Testis (tissue), 5 donors: ENCODE measurements at regions of chr10 and their contacts with region 1.

Region 1: GRCh38 chr10:16843252-16843870 is 26.1 kb upstream of the RSU1 start:
- DNase-seq: no peak
- H3K4me3 ChIP-seq: no peak overlapping the region
- H3K27ac ChIP-seq: no peak overlapping the region
- H3K4me1 ChIP-seq: no peaks in the 10 kb centered on the region
- H3K27me3 ChIP-seq: no peaks in the 10 kb centered on the region
- CTCF ChIP-seq: peak; percentile 41 to 76 (median 45)
- POLR2A ChIP-seq: no peak

Region 2: DNA sequence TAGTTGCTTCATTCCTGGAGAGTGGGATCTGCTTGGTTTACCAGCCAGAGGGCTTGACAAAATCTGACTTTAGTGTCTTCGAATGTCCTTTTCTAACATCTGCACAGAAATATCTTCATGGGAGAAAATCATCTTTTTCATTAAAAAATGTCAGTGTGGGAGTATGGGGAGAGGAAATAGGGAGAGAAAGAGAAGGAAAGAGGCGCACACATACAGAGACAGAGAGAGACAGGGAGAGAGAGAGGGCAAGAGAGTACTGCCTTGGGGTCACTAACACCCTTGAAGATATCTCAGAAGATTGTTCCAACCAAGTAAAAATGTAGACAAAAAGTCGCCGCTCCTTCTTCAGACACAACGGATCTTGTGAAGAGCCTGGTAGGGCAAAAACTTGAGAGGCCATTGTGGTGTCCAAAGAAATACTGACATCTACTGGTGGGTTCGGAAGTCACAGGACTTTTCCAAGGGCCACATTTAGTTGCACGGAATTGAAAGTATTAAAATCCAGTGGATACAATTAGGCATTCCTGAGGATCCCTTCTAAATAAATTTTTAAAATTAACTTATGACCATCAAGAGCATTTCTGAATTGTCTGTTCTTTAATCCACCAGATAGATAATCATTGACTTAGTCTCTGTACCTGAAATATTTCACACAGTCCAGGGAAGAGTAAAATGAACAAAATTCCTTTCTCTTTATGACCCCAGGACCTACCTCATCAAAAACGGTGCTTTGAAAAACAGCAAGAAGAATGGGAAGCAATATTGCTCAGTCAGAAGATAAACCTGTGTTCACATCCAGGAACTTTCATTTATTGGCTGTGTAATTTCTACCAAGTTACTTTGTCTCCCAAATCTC is 414.3 kb after region 1 on chr10:
- intact Hi-C with region 1: loop called (anchors 5 kb)
- DNase-seq: peak; percentile 74
- H3K4me3 ChIP-seq: peak overlapping the region in 1 of 2 donors; percentile 14
- H3K27ac ChIP-seq: peak overlapping the region; percentile 21 to 36
- H3K4me1 ChIP-seq: peaks cover 4% of the 10 kb centered on the region
- H3K27me3 ChIP-seq: no peaks in the 10 kb centered on the region
- CTCF ChIP-seq: peak; percentile 61 to 83 (median 76)
- POLR2A ChIP-seq: no peak

Region 3: DNA sequence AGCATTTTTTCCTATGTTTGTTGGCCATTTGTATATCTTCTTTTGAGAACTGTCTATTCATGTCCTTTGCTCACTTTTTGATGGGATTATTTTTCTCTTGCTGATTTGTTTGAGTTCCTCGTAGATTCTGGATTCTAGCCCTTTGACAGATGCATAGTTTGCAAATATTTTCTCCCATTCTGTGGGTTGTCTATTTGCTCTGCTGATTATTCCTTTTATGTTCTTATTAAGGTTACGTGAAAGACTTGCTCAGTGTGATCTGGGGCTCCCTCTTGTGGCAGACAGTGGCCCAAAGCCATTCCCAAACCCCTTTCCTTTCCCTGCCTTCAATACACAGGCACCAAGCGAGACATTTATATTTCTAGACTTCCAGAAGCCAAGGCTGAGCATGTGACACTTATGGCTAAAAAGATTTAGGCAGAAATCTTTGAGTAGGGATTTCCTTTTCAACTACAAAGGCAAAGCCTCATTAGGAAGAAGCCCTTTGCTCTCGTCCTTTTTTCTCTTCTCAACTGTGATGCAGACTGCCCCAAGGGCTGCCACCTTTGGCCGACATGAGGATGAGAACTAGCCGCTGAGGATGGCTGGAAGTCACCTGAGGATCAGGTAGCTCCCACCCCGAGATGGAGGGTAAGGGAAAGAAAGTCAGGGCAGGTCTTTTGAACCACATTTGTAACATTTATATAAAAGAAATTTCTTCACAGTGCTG is 587.4 kb after region 1 on chr10:
- intact Hi-C with region 1: loop called (anchors 10 kb)
- DNase-seq: peak; percentile 88
- H3K4me3 ChIP-seq: no peak overlapping the region
- H3K27ac ChIP-seq: no peak overlapping the region
- H3K4me1 ChIP-seq: peaks cover 4% of the 10 kb centered on the region
- H3K27me3 ChIP-seq: no peaks in the 10 kb centered on the region
- CTCF ChIP-seq: peak; percentile 71 to 83 (median 78)
- POLR2A ChIP-seq: no peak